ENCODE measurements at regions of chr1 and their contacts with region 1.

Region 1: GRCh38 chr1:179293340-179294327 is at the start of gene SOAT1:
- DNase-seq: peak; percentile 95
- H3K4me3 Mint-ChIP-seq: peak within 1 kb of the TSS; percentile 97
- H3K27ac Mint-ChIP-seq: peak within 1 kb of the TSS; percentile 91
- H3K4me1 Mint-ChIP-seq: peaks cover 41% of the 10 kb centered on the region
- H3K27me3 Mint-ChIP-seq: no peaks in the 10 kb centered on the region
- total RNA-seq, gene SOAT1: 37.8 to 42.9 TPM

Region 2: GRCh38 chr1:178587975-178588374 is 705.7 kb before region 1 on chr1:
- CTCF ChIA-PET with region 1: no interaction called
- POLR2A ChIA-PET with region 1: no interaction called
- intact Hi-C with region 1: no loop called
- DNase-seq: no peak
- H3K4me3 Mint-ChIP-seq: no peak overlapping the region
- H3K27ac Mint-ChIP-seq: no peak overlapping the region
- H3K4me1 Mint-ChIP-seq: no peaks in the 10 kb centered on the region
- H3K27me3 Mint-ChIP-seq: peaks cover 3% of the 10 kb centered on the region

Region 3: DNA sequence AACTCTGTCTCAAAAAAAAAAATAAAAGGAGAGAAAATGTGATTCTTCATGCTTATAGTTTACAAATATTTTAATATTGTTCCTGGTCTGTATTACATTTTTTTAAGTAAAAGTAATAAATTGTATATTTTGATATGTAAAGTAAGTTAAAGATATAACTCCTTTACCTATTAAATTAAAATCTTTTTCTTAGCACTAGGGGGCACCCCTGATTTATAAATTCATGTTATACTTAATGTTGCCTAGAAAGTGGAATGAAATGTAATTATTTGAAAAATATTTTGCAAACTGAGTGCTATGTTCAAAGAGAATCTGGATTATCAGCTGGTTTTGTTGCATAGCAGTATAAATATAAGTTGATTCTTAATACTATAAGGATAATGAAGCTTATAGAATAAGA is 519.4 kb before region 1 on chr1:
- CTCF ChIA-PET with region 1: no interaction called
- POLR2A ChIA-PET with region 1: no interaction called
- intact Hi-C with region 1: loop called (anchors 10 kb)
- DNase-seq: no peak
- H3K4me3 Mint-ChIP-seq: no peak overlapping the region
- H3K27ac Mint-ChIP-seq: no peak overlapping the region
- H3K4me1 Mint-ChIP-seq: no peaks in the 10 kb centered on the region
- H3K27me3 Mint-ChIP-seq: no peaks in the 10 kb centered on the region

Region 4: DNA sequence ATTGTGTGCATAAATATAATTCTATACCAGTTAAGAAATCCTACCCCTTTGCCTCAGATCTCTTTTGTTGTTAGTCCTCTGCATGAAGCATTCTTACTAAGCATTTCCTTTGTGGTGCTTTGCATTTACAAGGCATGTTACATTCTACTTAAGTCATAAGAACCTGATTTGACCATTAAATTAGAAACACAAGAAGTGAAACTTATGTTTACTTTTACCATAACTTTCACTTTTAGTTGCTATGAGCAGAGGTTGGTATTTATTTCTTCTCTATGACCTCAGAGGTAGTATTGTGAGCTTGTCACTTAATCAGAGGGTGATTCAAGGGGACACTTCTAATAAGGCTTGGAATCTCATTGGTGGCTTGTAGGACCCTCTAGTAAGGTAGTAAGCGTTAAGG is 258.9 kb before region 1 on chr1:
- CTCF ChIA-PET with region 1: no interaction called
- POLR2A ChIA-PET with region 1: no interaction called
- intact Hi-C with region 1: loop called (anchors 2 kb)
- DNase-seq: no peak
- H3K4me3 Mint-ChIP-seq: no peak overlapping the region
- H3K27ac Mint-ChIP-seq: peak overlapping the region; percentile 68
- H3K4me1 Mint-ChIP-seq: peaks cover 85% of the 10 kb centered on the region
- H3K27me3 Mint-ChIP-seq: no peaks in the 10 kb centered on the region

Region 5: GRCh38 chr1:179129702-179130473 is 163.7 kb before region 1 on chr1:
- CTCF ChIA-PET with region 1: no interaction called
- POLR2A ChIA-PET with region 1: interaction called, 4 read pairs
- intact Hi-C with region 1: loop called (anchors 2 kb)
- DNase-seq: peak; percentile 27
- H3K4me3 Mint-ChIP-seq: peak overlapping the region; percentile 59
- H3K27ac Mint-ChIP-seq: peak overlapping the region; percentile 82
- H3K4me1 Mint-ChIP-seq: peaks cover 24% of the 10 kb centered on the region
- H3K27me3 Mint-ChIP-seq: no peaks in the 10 kb centered on the region

Region 6: DNA sequence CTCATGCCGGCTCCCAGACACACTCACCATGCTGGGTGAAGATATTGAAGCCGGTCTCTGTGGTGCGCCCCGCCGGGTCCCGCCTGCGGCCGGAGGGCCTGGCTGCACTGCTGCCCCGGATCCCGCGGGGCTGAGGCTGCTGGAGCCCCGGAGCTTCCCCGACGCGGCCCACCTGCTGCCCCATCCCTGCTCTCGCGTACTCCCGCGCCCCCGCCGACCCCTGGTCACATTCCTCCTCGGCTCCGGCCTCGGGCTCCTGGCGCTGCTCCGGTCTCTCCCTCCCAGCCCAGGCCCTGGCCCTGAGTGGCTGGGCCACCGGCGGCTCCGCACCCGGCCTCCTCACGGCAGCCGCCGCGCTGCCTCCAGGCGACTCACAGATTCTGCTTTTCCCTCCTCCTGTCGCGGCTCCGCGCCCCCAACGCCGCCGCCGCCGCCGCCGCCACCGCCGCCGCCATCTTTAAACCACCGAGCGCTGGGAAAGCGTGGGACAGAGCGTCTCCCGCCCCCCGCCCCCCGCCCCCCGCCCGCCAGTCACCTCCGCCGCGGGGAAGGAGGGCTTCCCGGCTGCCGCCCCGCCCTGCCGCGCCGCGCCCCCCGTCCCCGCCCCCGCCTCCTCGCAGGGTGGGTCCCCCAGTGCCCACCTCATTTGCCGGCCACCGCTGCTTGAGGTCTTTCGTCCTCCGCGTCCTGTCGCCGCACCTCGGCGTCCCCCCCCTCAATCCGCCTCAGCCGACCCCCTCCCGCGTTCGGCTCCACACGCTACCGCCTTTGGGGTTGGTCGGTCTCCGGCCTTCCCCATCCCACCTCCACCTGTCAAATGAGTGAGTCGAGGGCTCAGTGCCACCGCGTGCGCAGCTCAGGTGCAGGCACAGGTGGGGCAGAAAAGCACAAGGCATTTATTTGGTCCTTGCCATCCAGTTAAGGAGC is 64.2 kb before region 1 on chr1 and contains the start of gene ABL2:
- CTCF ChIA-PET with region 1: no interaction called
- POLR2A ChIA-PET with region 1: interaction called, 5 read pairs
- intact Hi-C with region 1: loop called (anchors 1 kb)
- DNase-seq: peak; percentile 60
- H3K4me3 Mint-ChIP-seq: peak within 1 kb of the TSS; percentile 90
- H3K27ac Mint-ChIP-seq: peak within 1 kb of the TSS; percentile 80
- H3K4me1 Mint-ChIP-seq: peaks cover 34% of the 10 kb centered on the region
- H3K27me3 Mint-ChIP-seq: no peaks in the 10 kb centered on the region
- total RNA-seq, gene ABL2: 8.8 to 9.1 TPM

Measured in activated CD4-positive, alpha-beta memory T cell treated with anti-CD3 and anti-CD28 coated beads for 36 hours (primary cell).